HepG2 (cell line): ENCODE measurements at regions of chr6 and their contacts with region 1.

Region 1: GRCh38 chr6:138278326-138278725 is 60.0 kb upstream of the PBOV1 start:
- DNase-seq: peak; percentile 64
- ATAC-seq: peak; percentile 97
- H3K4me3 ChIP-seq: no peak overlapping the region
- H3K27ac ChIP-seq: no peak overlapping the region
- H3K4me1 ChIP-seq: no peaks in the 10 kb centered on the region
- H3K27me3 ChIP-seq: no peaks in the 10 kb centered on the region
- CTCF ChIP-seq: peak; percentile 87
- EP300 ChIP-seq: no peak
- POLR2A ChIP-seq: no peak
- RAD21 ChIP-seq: peak; percentile 72; the same call in 1 of the 2 replicates

Region 2: DNA sequence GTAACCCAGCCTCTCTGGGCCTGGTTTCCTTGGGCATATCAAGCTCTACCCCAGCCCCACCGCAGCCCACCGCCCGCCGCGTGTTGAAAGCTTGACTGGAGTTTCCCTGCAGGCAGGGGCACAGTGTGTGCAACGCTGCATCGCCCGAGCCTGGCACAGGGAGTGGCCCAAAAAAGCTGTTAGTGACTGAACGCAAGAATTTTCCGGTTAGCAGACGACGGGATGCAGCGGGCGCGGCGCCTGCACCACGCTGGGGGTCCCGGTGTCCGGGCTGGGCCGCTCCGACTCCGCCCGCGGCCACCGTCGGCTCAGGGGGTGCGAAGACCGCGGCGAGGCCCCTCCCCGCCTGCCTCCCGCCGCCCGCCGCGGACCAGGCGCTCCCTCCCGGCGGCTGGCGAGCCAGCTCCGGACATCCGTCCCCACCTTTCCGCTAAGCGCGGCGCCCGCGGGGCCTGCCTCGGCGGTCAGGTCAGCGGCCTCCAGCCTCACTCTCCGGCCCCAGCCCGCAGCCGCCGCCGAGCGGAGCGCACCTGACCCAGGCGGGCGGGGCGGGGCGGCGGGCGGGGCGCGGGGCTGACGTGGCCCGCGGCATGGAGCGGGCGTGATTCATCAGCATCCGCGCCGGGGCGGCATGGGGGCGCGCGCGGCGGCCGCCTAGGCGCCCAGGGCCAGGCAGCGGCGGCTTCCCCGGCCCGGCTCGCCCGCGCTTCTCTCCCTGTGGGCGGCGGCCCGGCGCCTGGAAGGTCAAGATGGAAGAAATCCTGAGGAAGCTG is 116.8 kb before region 1 on chr6 and contains the start of gene ARFGEF3:
- CTCF ChIA-PET with region 1: interaction called, 5 read pairs
- POLR2A ChIA-PET with region 1: no interaction called
- in situ Hi-C with region 1: no loop called
- intact Hi-C with region 1: loop called (anchors 5 kb)
- DNase-seq: peak; percentile 25
- ATAC-seq: peak; percentile 93
- H3K4me3 ChIP-seq: peak within 1 kb of the TSS; percentile 52 to 89 (median 62)
- H3K27ac ChIP-seq: no peak within 1 kb of the TSS
- H3K4me1 ChIP-seq: peaks cover 30% of the 10 kb centered on the region
- H3K27me3 ChIP-seq: peaks cover 3 to 53% of the 10 kb centered on the region in 2 experiments; a peak in 4 of 5 replicates
- CTCF ChIP-seq: no peak
- EP300 ChIP-seq: no peak
- POLR2A ChIP-seq: no peak; a peak in 1 of 4 replicates
- RAD21 ChIP-seq: peak; percentile 46
- total RNA-seq, gene ARFGEF3: 0.60 and 0.97 TPM in 2 replicates

Region 3: GRCh38 chr6:138222901-138223546 is 55.3 kb before region 1 on chr6:
- CTCF ChIA-PET with region 1: no interaction called
- POLR2A ChIA-PET with region 1: no interaction called
- in situ Hi-C with region 1: no loop called
- intact Hi-C with region 1: loop called (anchors 5 kb)
- DNase-seq: peak; percentile 90
- ATAC-seq: peak; percentile 85
- H3K4me3 ChIP-seq: no peak overlapping the region
- H3K27ac ChIP-seq: peak overlapping the region; percentile 50
- H3K4me1 ChIP-seq: peaks cover 67% of the 10 kb centered on the region
- H3K27me3 ChIP-seq: no peaks in the 10 kb centered on the region
- CTCF ChIP-seq: peak; percentile 19; the same call in 1 of the 2 replicates
- EP300 ChIP-seq: peak in 1 of 2 experiments; percentile 92; a peak in 2 of 4 replicates
- POLR2A ChIP-seq: no peak
- RAD21 ChIP-seq: no peak